ENCODE measurements at regions of chr17 and their contacts with region 1.

Region 1: DNA sequence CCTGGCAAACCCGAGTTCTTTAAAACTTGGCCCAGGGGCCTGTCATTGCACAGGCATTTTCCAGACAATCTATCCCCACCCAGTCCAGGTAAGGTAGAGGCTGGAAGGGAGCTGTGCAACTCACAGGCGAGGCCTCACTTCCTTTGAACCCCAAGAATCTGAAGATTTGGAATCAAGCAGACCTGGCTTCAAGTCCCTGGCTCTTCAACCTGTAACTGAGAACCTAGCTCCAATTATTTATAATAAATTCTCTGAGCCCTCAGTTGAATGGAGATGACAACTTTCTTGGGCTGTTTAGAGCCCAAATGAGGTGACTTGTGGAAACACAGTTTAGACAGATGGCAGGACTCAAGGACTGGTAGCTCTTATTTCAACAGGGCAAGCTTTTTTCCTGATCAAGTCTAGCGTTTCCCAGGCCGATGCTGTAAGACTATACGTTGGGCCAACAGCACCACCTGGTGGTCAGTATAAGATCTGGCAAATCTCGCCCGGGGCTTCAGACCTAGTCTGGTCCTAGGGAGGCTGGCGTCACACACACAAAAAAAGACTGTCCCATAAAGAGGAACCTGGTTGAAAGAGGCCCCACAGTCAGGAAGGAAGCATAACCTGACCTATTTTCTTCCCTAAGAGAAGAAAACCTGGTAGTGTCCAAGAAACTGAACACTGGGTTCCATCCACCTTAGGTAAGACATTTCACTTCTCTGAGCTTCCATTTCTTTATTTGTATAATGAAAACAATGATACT is 117.9 kb downstream of the C17orf67 start:
- DNase-seq: peak; percentile 84 to 88
- ATAC-seq: peak; percentile 94 to 99
- H3K4me3 ChIP-seq: no peak overlapping the region
- H3K27ac ChIP-seq: no peak overlapping the region
- H3K4me1 ChIP-seq: no peaks in the 10 kb centered on the region
- CTCF ChIP-seq: peak; percentile 93
- EP300 ChIP-seq: no peak
- POLR2A ChIP-seq: no peak
- RAD21 ChIP-seq: peak; percentile 97

Region 2: DNA sequence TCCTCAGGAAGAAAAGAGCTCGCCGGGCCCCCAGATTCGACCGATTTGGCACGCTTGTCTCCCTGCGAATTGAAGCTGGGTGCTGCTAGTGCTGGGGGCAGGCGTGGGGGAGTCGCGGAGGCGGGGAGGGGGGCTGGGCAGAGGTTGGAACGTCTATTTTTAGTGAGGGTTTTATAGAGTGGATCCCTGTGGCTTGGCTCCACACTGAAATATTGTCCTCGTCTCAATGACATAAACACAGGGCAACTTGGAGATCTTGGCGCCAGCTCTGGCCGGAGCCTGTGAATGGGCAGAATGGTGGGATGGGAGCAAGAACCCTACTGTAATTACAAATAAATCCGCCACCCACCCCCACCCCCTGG is 138.0 kb before region 1 on chr17:
- CTCF ChIA-PET with region 1: interaction called, 27 read pairs
- POLR2A ChIA-PET with region 1: no interaction called
- DNase-seq: no peak
- ATAC-seq: no peak
- H3K4me3 ChIP-seq: no peak overlapping the region
- H3K27ac ChIP-seq: no peak overlapping the region
- H3K4me1 ChIP-seq: no peaks in the 10 kb centered on the region
- CTCF ChIP-seq: no peak
- EP300 ChIP-seq: no peak
- POLR2A ChIP-seq: no peak
- RAD21 ChIP-seq: no peak

Region 3: GRCh38 chr17:56610321-56610720 is 105.5 kb before region 1 on chr17:
- CTCF ChIA-PET with region 1: interaction called, 12 read pairs
- POLR2A ChIA-PET with region 1: no interaction called
- DNase-seq: no peak
- ATAC-seq: no peak
- H3K4me3 ChIP-seq: no peak overlapping the region
- H3K27ac ChIP-seq: no peak overlapping the region
- H3K4me1 ChIP-seq: no peaks in the 10 kb centered on the region
- CTCF ChIP-seq: no peak
- EP300 ChIP-seq: no peak
- POLR2A ChIP-seq: no peak
- RAD21 ChIP-seq: no peak

Region 4: DNA sequence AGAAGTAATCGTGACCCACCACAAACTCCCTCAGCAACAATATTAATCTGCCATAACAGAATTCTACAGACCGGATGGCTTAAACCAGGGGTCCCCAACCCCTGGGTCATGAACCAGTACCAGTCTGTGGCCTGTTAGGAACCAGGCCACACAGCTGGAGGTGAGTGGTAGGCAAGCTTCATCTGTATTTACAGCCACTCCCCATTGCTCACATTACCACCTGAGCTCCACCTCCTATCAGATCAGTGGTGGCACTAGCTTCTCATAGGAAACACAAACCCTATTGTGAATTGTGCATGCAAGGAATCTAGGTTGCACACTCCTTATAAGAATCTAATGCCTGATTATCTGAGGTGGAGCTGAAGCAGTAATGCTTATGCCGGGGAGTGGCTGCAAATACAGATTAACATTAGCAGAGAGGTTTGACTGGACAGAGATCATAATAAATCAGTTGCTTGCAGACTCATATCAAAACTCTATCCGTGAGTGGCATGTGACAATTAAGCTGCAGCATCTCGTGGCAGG is 47.8 kb before region 1 on chr17:
- CTCF ChIA-PET with region 1: interaction called, 13 read pairs
- POLR2A ChIA-PET with region 1: no interaction called
- DNase-seq: no peak
- ATAC-seq: no peak
- H3K4me3 ChIP-seq: no peak overlapping the region
- H3K27ac ChIP-seq: no peak overlapping the region
- H3K4me1 ChIP-seq: no peaks in the 10 kb centered on the region
- CTCF ChIP-seq: no peak
- EP300 ChIP-seq: no peak
- POLR2A ChIP-seq: no peak
- RAD21 ChIP-seq: no peak

Region 5: GRCh38 chr17:56727876-56728620 is 12.3 kb after region 1 on chr17:
- CTCF ChIA-PET with region 1: interaction called, 28 read pairs
- POLR2A ChIA-PET with region 1: no interaction called
- DNase-seq: no peak
- ATAC-seq: peak; percentile 21 to 62; a peak in 5 of 6 replicates
- H3K4me3 ChIP-seq: no peak overlapping the region
- H3K27ac ChIP-seq: no peak overlapping the region
- H3K4me1 ChIP-seq: no peaks in the 10 kb centered on the region
- CTCF ChIP-seq: no peak
- EP300 ChIP-seq: no peak
- POLR2A ChIP-seq: no peak
- RAD21 ChIP-seq: peak in 1 of 2 experiments; percentile 16; a peak in 1 of 5 replicates

Region 6: GRCh38 chr17:56779898-56780733 is 64.3 kb after region 1 on chr17:
- CTCF ChIA-PET with region 1: interaction called, 44 read pairs
- POLR2A ChIA-PET with region 1: interaction called, 4 read pairs
- DNase-seq: peak; percentile 67 to 77
- ATAC-seq: peak; percentile 94 to 98
- H3K4me3 ChIP-seq: peak overlapping the region; percentile 22; the same call in 1 of the 3 replicates
- H3K27ac ChIP-seq: peak overlapping the region in 1 of 2 experiments; percentile 64; a peak in 3 of 6 replicates
- H3K4me1 ChIP-seq: peaks cover 6% of the 10 kb centered on the region; the same call in 2 of the 3 replicates
- CTCF ChIP-seq: peak; percentile 99
- EP300 ChIP-seq: no peak
- POLR2A ChIP-seq: no peak
- RAD21 ChIP-seq: peak; percentile 91 to 98

Measured in A549 (cell line).